ENCODE measurements at regions of chr14 and their contacts with region 1.

Region 1: GRCh38 chr14:92121670-92122350 is at the starts of genes CPSF2 and NDUFB1:
- DNase-seq: peak; percentile 88
- H3K4me3 ChIP-seq: peak within 1 kb of the TSS; percentile 73 to 94 (median 86)
- H3K27ac ChIP-seq: peak within 1 kb of the TSS; percentile 91 to 95 (median 93)
- H3K4me1 ChIP-seq: peaks cover 0 to 59% (median 34%) of the 10 kb centered on the region in 4 donors
- H3K27me3 ChIP-seq: no peaks in the 10 kb centered on the region
- CTCF ChIP-seq: peak in 2 of 4 experiments; percentile 22 to 30
- EP300 ChIP-seq: no peak
- POLR2A ChIP-seq: peak; percentile 16 to 55
- total RNA-seq, gene CPSF2: 22.4 to 41.8 (median 27.0) TPM
- total RNA-seq, gene NDUFB1: 374 to 888 (median 561) TPM

Region 2: DNA sequence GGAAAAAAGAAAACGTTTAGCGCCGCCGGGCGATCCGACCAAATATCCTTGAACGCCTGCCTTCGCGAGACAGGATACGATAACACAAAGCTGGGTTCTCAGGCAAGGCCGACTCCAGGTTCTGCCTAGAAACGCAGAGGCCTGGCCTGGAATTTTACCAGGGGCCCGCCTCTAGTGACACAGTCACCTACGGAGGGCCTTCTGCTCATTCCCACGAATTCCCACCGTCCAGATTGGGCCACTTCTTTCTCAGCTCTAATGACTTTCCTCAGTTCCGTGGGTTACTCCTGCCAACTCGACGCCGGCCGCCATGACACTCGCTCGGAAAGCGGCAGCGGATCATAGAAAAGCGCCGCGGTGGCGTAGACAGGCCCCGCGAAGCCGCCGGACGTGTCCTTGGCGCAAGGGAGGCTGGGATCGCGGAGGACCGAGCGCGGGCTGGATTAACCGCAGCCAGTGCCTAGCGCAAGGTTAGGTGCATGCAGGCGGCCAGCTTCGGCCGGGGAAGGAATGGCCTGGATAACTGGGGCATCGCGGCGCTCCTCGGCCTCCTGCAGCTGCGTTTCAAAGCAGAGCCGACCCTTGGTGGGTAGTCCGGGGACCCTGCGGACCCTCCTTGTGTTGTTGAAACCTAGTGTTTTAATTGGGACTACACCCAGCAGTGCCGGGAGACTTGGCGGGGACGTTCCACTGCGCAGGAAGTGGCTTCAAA is 81.9 kb before region 1 on chr14 and contains the start of gene TRIP11:
- intact Hi-C with region 1: loop called (anchors 5 kb)
- DNase-seq: peak; percentile 96
- H3K4me3 ChIP-seq: peak within 1 kb of the TSS; percentile 68 to 96 (median 78)
- H3K27ac ChIP-seq: peak within 1 kb of the TSS; percentile 89 to 98 (median 92)
- H3K4me1 ChIP-seq: peaks cover 0 to 45% (median 40%) of the 10 kb centered on the region in 4 donors
- H3K27me3 ChIP-seq: no peaks in the 10 kb centered on the region
- CTCF ChIP-seq: no peak
- EP300 ChIP-seq: peak in 1 of 4 donors; percentile 58
- POLR2A ChIP-seq: peak; percentile 63 to 78
- total RNA-seq, gene TRIP11: 21.3 to 35.5 (median 32.4) TPM

Region 3: GRCh38 chr14:92135267-92135666 is 13.5 kb after region 1 on chr14:
- intact Hi-C with region 1: no loop called
- DNase-seq: no peak
- H3K4me3 ChIP-seq: no peak overlapping the region
- H3K27ac ChIP-seq: no peak overlapping the region
- H3K4me1 ChIP-seq: no peaks in the 10 kb centered on the region
- H3K27me3 ChIP-seq: no peaks in the 10 kb centered on the region
- CTCF ChIP-seq: peak in 3 of 4 experiments; percentile 28 to 50 (median 37)
- EP300 ChIP-seq: no peak
- POLR2A ChIP-seq: no peak

Region 4: DNA sequence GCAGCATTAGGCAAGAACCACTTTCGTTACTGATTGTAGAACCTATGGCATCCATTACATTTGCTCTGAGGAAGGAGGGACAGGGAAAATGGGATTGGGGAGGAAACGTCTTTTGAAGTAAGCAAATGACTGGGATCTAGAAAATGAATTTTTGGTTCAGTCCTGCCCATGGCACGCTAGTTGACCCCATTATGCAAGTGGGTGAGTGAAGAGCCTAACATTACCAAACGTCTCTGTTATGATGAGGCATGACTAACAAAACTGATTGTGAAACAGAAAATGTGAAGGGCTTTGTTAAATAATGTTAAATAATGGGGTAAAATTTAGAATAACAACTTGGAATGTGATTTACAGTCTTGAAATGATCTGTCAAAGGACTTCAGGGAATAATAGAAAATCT is 38.8 kb after region 1 on chr14:
- intact Hi-C with region 1: no loop called
- DNase-seq: no peak
- H3K4me3 ChIP-seq: no peak overlapping the region
- H3K27ac ChIP-seq: peak overlapping the region in 2 of 4 donors; percentile 6 to 11
- H3K4me1 ChIP-seq: no peaks in the 10 kb centered on the region
- H3K27me3 ChIP-seq: no peaks in the 10 kb centered on the region
- CTCF ChIP-seq: no peak
- EP300 ChIP-seq: no peak
- POLR2A ChIP-seq: no peak

Region 5: GRCh38 chr14:92686900-92687444 is 565.2 kb after region 1 on chr14:
- intact Hi-C with region 1: loop called (anchors 5 kb)
- DNase-seq: peak; percentile 90
- H3K4me3 ChIP-seq: peak overlapping the region; percentile 13 to 46 (median 38)
- H3K27ac ChIP-seq: peak overlapping the region in 3 of 4 donors; percentile 65 to 74 (median 68)
- H3K4me1 ChIP-seq: peaks cover 0 to 24% (median 21%) of the 10 kb centered on the region in 4 donors
- H3K27me3 ChIP-seq: no peaks in the 10 kb centered on the region
- CTCF ChIP-seq: peak; percentile 91 to 95 (median 94)
- EP300 ChIP-seq: no peak
- POLR2A ChIP-seq: no peak

Region 6: DNA sequence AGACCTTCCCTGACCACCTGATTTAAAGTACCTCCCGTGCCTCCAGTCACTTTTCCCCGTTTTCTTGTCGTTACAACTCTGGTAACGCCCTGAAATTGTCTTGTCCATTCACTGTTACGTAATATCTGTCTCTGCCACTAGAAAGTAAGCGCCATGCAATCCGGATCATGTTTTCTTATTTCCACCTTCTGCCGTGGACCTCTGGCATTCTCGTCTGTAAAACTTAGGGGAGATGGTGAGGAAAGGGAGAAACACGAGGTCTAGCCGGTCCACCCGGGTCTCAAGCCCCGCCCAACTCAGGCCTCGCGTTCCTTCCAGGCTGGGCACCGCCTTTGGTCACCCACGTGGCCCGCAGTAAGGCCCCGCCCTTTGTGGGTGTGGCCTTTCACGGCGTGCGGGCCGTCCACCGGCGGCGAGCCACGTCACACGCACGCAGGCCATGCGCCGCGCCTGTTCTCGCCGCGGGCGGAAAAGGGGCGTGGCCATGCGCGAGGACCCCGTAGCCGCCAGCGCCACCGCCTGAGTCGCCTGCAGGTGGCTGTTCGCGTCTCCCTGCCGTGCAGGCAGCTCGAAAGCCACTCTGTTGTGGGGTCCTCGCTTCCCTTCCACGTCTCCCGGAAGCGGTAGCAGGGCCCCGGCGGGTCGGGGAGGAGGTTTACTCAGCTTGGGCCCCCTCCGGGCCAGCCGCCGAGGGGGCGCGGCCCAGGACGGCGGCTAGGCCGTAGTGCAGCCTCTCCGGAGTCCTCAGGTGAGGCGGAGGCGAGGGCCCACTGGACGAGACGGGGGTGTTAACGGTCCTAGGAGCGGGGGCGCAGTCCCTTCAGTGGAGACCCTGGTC is 672.1 kb after region 1 on chr14 and contains the start of gene GOLGA5:
- intact Hi-C with region 1: loop called (anchors 5 kb)
- DNase-seq: peak; percentile 99
- H3K4me3 ChIP-seq: peak within 1 kb of the TSS; percentile 70 to 98 (median 95)
- H3K27ac ChIP-seq: peak within 1 kb of the TSS; percentile 86 to 92 (median 89)
- H3K4me1 ChIP-seq: peaks cover 0 to 22% (median 17%) of the 10 kb centered on the region in 4 donors
- H3K27me3 ChIP-seq: no peaks in the 10 kb centered on the region
- CTCF ChIP-seq: no peak
- EP300 ChIP-seq: peak in 1 of 4 donors; percentile 62
- POLR2A ChIP-seq: peak; percentile 35 to 56
- total RNA-seq, gene GOLGA5: 31.8 to 41.0 (median 34.7) TPM

Measured in sigmoid colon (tissue), 7 donors.